Common myeloid progenitor, CD34-positive (primary cell): ENCODE measurements at regions of chr3 and their contacts with region 1.

Region 1: GRCh38 chr3:193780810-193781472 is 187.9 kb downstream of the OPA1 start:
- DNase-seq: peak; percentile 43 to 65 (median 56)
- H3K4me3 ChIP-seq: no peak overlapping the region
- H3K27ac ChIP-seq: no peak overlapping the region
- H3K4me1 ChIP-seq: peaks cover 0 to 5% (median 0%) of the 10 kb centered on the region in 4 experiments
- H3K27me3 ChIP-seq: peaks cover 0 to 65% (median 33%) of the 10 kb centered on the region in 5 experiments

Region 2: DNA sequence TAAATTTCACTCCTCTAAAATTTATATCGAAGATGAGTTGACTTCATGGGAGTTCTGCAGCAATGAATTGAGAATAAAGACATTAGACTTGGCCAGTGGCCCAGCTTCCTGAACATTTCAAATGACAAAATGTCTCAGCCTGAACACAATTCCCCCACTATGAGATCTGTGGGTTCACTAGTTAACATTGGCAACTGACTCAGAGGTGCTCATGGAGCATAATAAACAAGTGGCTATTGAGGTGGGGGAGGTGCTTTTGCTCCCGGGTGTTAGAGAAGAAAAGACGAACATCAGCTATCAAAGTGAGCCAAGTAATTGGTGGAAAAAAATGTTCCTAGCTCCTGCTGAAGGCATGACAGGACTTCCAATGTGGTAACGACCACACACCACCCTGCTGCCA is 232.5 kb before region 1 on chr3:
- CTCF ChIA-PET with region 1: no interaction called
- POLR2A ChIA-PET with region 1: no interaction called
- DNase-seq: no peak
- H3K4me3 ChIP-seq: no peak overlapping the region
- H3K27ac ChIP-seq: no peak overlapping the region
- H3K4me1 ChIP-seq: no peaks in the 10 kb centered on the region
- H3K27me3 ChIP-seq: no peaks in the 10 kb centered on the region

Region 3: GRCh38 chr3:193665370-193665989 is 115.5 kb before region 1 on chr3:
- CTCF ChIA-PET with region 1: interaction called, 13 read pairs
- POLR2A ChIA-PET with region 1: no interaction called
- DNase-seq: peak; percentile 46 to 80 (median 77)
- H3K4me3 ChIP-seq: no peak overlapping the region
- H3K27ac ChIP-seq: no peak overlapping the region
- H3K4me1 ChIP-seq: peaks cover 0 to 9% (median 0%) of the 10 kb centered on the region in 4 experiments
- H3K27me3 ChIP-seq: no peaks in the 10 kb centered on the region

Region 4: DNA sequence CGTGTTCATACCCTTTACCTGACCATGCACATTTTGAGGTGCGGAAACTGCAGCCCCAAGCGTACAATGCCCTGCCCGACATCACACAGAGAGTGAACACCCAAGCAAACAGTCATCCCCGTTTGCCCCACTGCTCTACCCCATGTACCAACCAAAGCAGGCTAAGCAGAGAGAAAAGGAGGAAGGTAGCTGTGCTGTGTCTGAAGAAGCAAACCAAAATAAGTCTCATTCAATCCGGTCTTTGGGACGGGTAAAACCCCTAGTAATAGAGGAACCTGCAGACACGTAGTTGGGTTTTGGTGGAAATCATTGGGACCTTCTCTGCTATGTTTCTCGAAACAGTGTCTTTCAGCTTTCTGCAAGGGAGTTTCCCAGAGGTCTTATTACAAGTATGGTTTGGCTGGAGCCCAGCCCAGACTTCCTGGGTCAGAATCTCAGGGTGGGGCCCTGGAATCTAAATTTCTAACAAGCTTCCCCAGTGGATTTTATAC is 190.4 kb after region 1 on chr3:
- CTCF ChIA-PET with region 1: interaction called, 13 read pairs
- POLR2A ChIA-PET with region 1: no interaction called
- DNase-seq: peak; percentile 26 to 82 (median 82)
- H3K4me3 ChIP-seq: peak overlapping the region in 1 of 7 experiments; percentile 16
- H3K27ac ChIP-seq: no peak overlapping the region
- H3K4me1 ChIP-seq: peaks cover 10 to 13% (median 12%) of the 10 kb centered on the region in 4 experiments
- H3K27me3 ChIP-seq: peaks cover 0 to 74% (median 17%) of the 10 kb centered on the region in 5 experiments

Region 5: DNA sequence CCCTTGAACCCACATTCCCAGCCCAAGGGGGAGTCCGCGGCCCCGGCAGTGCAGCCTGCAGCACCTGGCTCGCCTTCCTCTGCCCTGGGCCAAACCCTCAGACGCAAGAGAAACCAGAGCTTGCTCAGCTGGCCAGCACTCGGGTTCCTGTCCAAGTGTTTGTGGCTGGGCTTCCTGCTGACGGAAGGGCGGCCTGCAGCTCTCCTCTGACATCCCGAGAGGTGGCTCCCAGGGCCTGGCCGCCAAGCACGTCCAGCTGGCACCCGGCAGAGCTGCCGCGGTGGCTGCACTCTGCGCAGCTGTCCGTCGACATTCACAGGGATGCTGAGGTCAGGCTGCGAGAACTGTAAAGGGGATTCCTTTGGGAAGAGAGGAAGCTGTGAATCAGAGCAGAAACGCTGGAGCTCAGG is 484.5 kb after region 1 on chr3:
- CTCF ChIA-PET with region 1: interaction called, 10 read pairs
- POLR2A ChIA-PET with region 1: no interaction called
- DNase-seq: peak in 2 of 3 donors; percentile 40 to 53
- H3K4me3 ChIP-seq: peak overlapping the region in 3 of 7 experiments; percentile 16 to 55 (median 36)
- H3K27ac ChIP-seq: no peak overlapping the region
- H3K4me1 ChIP-seq: peaks cover 0 to 50% (median 20%) of the 10 kb centered on the region in 4 experiments
- H3K27me3 ChIP-seq: no peaks in the 10 kb centered on the region

Region 6: GRCh38 chr3:194404365-194405140 is 623.6 kb after region 1 on chr3:
- CTCF ChIA-PET with region 1: interaction called, 10 read pairs
- POLR2A ChIA-PET with region 1: no interaction called
- DNase-seq: peak; percentile 60 to 76 (median 67)
- H3K4me3 ChIP-seq: no peak overlapping the region
- H3K27ac ChIP-seq: no peak overlapping the region
- H3K4me1 ChIP-seq: peaks cover under 1 to 7% (median 6%) of the 10 kb centered on the region in 4 experiments
- H3K27me3 ChIP-seq: peaks cover 0 to 7% (median 0%) of the 10 kb centered on the region in 5 experiments